WTC11 (cell line): ENCODE measurements at regions of chr16 and their contacts with region 1.

Region 1: GRCh38 chr16:9008601-9009260 is 45.0 kb upstream of the USP7 start:
- DNase-seq: peak; percentile 92
- ATAC-seq: peak; percentile 88
- H3K4me3 Mint-ChIP-seq: peak overlapping the region; percentile 25; the same call in 1 of the 2 replicates
- H3K27ac Mint-ChIP-seq: no peak overlapping the region
- H3K4me1 Mint-ChIP-seq: peaks cover 6% of the 10 kb centered on the region
- H3K27me3 Mint-ChIP-seq: no peaks in the 10 kb centered on the region; the same call in none of the 2 replicates
- CTCF ChIP-seq: peak; percentile 80

Region 2: DNA sequence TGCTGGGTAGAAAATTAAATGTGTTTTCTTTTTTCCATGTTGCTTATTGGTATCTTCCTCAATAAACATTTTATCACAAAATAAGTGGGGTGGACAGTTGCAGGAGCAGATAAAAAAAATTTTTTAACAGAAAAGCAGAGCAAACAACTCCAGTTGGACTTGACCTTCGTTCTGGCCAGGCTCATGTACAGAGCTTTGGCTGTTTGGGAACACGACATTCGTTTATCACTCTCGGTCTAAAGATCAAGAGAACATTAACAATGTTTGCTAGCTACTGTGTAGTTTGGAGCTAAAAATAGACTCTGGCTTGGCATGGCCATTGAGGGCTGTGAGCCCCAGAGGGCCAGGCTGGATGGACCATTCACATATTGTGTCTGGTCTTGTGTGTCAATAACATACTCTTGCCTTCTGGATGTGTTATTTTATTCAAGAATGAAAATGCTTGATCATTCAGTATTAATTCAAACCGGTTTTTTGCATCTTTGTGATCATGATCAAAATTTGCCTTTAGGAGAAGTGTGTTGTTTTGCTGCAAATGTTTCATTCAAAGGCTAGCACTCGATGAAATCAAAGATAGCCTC is 267.9 kb before region 1 on chr16:
- CTCF ChIA-PET with region 1: no interaction called
- POLR2A ChIA-PET with region 1: no interaction called
- DNase-seq: no peak
- ATAC-seq: no peak
- H3K4me3 Mint-ChIP-seq: no peak overlapping the region
- H3K27ac Mint-ChIP-seq: no peak overlapping the region
- H3K4me1 Mint-ChIP-seq: peaks cover 6% of the 10 kb centered on the region; the same call in 1 of the 2 replicates
- H3K27me3 Mint-ChIP-seq: peaks cover 5% of the 10 kb centered on the region
- CTCF ChIP-seq: no peak

Region 3: DNA sequence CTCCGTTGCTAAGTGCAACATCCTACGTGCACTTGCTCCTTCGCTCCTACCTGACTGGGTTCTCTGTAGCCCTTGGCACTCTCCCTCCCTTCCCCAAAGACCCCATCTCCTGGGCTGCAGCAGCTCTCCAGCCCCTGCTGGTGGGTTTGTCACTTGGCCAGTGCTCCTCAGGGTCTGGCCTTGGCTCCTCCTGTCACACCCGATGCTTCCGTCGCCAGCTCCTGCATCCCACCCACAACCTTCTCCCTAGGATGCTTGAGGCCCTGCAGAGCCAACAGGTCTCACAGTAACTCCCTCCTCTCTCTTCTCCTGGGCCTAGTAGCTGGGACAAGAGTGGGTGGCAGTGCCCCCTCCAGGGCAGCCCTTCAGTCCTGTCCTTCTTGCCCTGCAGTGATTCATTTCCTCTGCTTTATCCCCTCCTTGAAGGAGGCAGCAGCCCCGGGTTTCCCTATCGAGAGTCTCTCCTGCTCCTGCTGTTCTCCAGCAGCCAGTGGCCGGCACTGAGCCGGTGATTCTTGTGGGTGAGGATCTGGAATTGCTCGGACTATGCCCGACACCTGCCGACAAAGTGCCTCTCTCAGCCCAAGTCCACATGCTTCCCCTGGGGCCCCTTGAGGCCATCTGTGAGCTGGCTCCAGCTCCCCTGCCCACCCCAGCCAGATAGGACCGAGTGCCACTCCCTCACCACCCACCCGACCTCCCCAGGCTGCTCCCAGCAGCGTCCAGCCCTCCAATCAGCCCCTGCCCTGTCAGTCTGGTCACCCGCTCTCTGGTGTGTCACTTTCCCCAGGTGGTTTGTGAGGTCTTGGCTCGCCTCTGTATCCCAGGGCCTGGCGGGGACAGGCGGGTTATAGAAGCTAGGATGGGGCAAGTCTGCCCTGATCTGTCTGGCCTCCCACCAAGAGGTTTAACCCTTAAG is 122.8 kb before region 1 on chr16:
- CTCF ChIA-PET with region 1: interaction called, 36 read pairs
- POLR2A ChIA-PET with region 1: no interaction called
- DNase-seq: no peak
- ATAC-seq: peak; percentile 61
- H3K4me3 Mint-ChIP-seq: no peak overlapping the region
- H3K27ac Mint-ChIP-seq: peak overlapping the region; percentile 36
- H3K4me1 Mint-ChIP-seq: peaks cover 15% of the 10 kb centered on the region
- H3K27me3 Mint-ChIP-seq: no peaks in the 10 kb centered on the region; the same call in 1 of the 2 replicates
- CTCF ChIP-seq: no peak

Region 4: GRCh38 chr16:8924214-8924613 is 84.5 kb before region 1 on chr16:
- CTCF ChIA-PET with region 1: interaction called, 436 read pairs
- POLR2A ChIA-PET with region 1: no interaction called
- DNase-seq: no peak
- ATAC-seq: no peak
- H3K4me3 Mint-ChIP-seq: no peak overlapping the region
- H3K27ac Mint-ChIP-seq: peak overlapping the region; percentile 34
- H3K4me1 Mint-ChIP-seq: peaks cover 3% of the 10 kb centered on the region; the same call in 1 of the 2 replicates
- H3K27me3 Mint-ChIP-seq: no peaks in the 10 kb centered on the region
- CTCF ChIP-seq: no peak

Region 5: DNA sequence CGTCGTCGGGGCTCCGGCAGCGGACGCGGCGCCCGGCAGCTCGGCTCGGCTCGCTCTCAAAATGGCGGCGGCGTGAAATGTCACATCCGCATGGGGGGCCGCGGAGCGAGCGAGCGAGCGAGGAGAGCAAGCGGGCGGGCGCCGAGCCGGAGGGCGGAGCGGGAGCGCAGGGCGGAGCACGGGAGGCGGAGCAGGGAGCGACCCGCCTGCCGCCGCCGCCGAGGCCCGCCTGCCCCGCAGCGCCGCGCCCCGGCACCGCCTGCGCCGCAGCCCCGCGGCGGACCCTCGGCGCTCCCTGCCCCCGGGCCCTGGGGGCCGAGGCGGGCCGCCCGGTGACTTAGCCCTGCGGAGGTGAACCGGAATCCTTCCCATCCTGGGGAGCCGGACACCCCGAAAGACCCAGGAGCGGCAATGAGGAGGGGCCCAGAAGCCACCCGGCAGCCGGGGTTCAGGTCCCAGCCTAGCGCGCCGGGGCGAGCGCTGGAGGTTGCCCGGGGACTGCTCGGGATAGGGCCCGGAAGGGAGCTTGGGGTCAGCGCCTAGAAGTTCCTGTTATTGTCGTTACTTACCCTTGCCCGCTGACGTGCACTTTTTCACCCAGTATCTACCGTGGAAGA is 44.8 kb before region 1 on chr16 and contains the start of gene USP7:
- CTCF ChIA-PET with region 1: interaction called, 48 read pairs
- POLR2A ChIA-PET with region 1: no interaction called
- DNase-seq: peak; percentile 89
- ATAC-seq: peak; percentile 73
- H3K4me3 Mint-ChIP-seq: peak within 1 kb of the TSS; percentile 90
- H3K27ac Mint-ChIP-seq: 0 out of 2 replicates have a peak within 1 kb of the TSS, but pooled peaks have one; percentile 44
- H3K4me1 Mint-ChIP-seq: peaks cover 59% of the 10 kb centered on the region
- H3K27me3 Mint-ChIP-seq: peaks cover 9% of the 10 kb centered on the region
- CTCF ChIP-seq: no peak
- total RNA-seq, gene USP7: 153 to 211 TPM (median 161 TPM) in 3 replicates

Region 6: GRCh38 chr16:8998114-8998513 is 10.6 kb before region 1 on chr16:
- CTCF ChIA-PET with region 1: interaction called, 38 read pairs
- POLR2A ChIA-PET with region 1: no interaction called
- DNase-seq: no peak
- ATAC-seq: no peak
- H3K4me3 Mint-ChIP-seq: no peak overlapping the region
- H3K27ac Mint-ChIP-seq: no peak overlapping the region
- H3K4me1 Mint-ChIP-seq: peaks cover 5% of the 10 kb centered on the region; the same call in 1 of the 2 replicates
- H3K27me3 Mint-ChIP-seq: no peaks in the 10 kb centered on the region; the same call in 1 of the 2 replicates
- CTCF ChIP-seq: no peak

Region 7: GRCh38 chr16:9219813-9220212 is 211.1 kb after region 1 on chr16:
- CTCF ChIA-PET with region 1: no interaction called
- POLR2A ChIA-PET with region 1: no interaction called
- DNase-seq: no peak
- ATAC-seq: no peak
- H3K4me3 Mint-ChIP-seq: no peak overlapping the region
- H3K27ac Mint-ChIP-seq: no peak overlapping the region
- H3K4me1 Mint-ChIP-seq: peaks cover 7% of the 10 kb centered on the region
- H3K27me3 Mint-ChIP-seq: no peaks in the 10 kb centered on the region; the same call in 1 of the 2 replicates
- CTCF ChIP-seq: no peak